ENCODE measurements at regions of chr16 and their contacts with region 1.

Region 1: DNA sequence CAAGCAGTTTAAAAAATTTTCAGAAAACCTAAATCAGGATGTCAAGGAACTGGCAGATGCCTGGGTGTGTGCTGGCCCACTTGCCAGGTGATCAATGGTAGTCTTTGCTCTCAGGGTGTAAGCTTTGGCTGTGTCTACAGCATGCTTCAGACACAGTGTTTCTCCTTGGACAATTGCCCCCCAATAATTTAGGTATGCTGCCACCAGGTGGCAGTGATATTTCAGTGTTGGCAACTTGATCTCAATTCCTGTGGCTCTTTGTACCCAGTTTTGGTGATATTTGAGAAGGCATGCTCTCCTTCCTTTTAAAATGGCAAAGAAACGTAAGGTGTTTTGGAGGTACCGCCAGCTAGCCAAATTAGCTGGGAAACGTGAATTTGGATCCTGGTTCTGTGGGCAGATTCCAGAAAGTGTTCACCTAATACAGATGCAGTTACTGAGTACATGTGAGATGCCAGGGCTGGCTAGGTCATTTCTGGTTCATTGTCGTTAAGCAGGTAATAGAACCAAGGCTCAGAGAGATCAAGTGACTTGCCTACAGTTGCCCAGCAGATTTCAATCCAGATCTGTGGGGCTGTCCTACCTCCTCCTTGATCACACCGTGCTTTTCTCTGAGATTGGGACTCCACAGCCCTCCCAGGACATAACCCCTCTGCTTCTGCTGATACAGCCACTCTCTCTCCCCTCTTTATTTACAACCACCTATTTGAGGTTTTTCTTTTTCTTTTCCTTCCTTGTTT is 155.6 kb upstream of the PLCG2 start:
- DNase-seq: peak; percentile 73
- ATAC-seq: peak; percentile 52
- H3K4me3 Mint-ChIP-seq: no peak overlapping the region
- H3K27ac Mint-ChIP-seq: peak overlapping the region; percentile 17
- H3K4me1 Mint-ChIP-seq: peaks cover 29% of the 10 kb centered on the region
- H3K27me3 Mint-ChIP-seq: no peaks in the 10 kb centered on the region

Region 2: GRCh38 chr16:81652798-81653505 is 29.4 kb after region 1 on chr16:
- CTCF ChIA-PET with region 1: no interaction called
- DNase-seq: no peak
- ATAC-seq: no peak
- H3K4me3 Mint-ChIP-seq: no peak overlapping the region
- H3K27ac Mint-ChIP-seq: peak overlapping the region; percentile 19
- H3K4me1 Mint-ChIP-seq: peaks cover 2% of the 10 kb centered on the region
- H3K27me3 Mint-ChIP-seq: no peaks in the 10 kb centered on the region

Region 3: GRCh38 chr16:81696961-81697615 is 73.6 kb after region 1 on chr16:
- CTCF ChIA-PET with region 1: interaction called, 14 read pairs
- DNase-seq: peak; percentile 65
- ATAC-seq: peak; percentile 45
- H3K4me3 Mint-ChIP-seq: no peak overlapping the region
- H3K27ac Mint-ChIP-seq: no peak overlapping the region
- H3K4me1 Mint-ChIP-seq: peaks cover 3% of the 10 kb centered on the region
- H3K27me3 Mint-ChIP-seq: no peaks in the 10 kb centered on the region

Region 4: GRCh38 chr16:81723098-81723723 is 99.7 kb after region 1 on chr16:
- CTCF ChIA-PET with region 1: interaction called, 11 read pairs
- DNase-seq: peak; percentile 51
- ATAC-seq: peak; percentile 80
- H3K4me3 Mint-ChIP-seq: no peak overlapping the region
- H3K27ac Mint-ChIP-seq: no peak overlapping the region
- H3K4me1 Mint-ChIP-seq: peaks cover 16% of the 10 kb centered on the region
- H3K27me3 Mint-ChIP-seq: peaks cover 6% of the 10 kb centered on the region

Region 5: DNA sequence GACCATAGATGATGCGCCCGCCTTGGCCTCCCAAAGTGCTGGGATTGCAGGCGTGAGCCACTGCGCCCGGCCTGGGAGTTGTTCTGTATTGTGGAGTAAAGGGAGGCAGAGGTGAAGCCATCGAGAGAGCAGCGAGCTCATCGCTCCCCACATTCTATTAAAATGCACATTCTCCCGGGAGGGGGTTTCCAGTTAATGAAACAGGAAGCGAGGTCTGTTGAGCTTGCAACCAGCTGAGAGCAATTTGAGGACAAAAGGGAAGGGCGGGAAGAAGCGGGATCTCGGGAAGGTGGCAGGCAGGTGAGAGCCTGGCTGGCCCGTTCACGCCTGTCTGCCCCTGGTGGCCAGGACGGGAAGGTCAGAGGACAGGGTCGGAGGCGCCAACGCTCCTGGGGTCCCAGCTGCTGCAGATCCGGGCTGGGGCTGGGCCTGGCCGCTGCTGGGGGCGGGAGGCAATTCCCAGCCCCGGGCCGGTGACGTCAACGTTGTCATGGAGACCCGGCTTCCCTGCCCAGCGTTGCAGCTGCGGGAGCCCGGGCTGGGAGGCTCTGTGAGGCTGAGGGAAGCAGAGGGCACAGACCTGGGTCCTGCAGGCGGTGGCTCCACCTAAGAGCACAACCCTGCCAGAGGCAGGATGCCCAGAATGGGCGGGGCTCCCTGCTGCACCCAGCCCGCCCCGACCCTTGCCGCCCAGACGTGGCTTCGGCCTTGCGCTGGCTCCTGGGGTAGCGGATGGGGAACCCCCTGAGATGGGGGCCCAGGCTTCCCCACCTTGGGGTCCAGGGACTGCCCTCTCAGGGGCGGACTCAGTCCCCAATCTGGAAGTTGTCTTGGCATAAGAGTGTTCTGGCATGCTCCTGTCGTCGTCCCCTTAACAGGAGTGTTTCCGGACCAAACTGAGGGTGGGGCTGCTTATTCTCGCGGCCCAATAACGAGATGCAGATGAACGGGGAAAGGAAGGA is 106.8 kb after region 1 on chr16:
- CTCF ChIA-PET with region 1: interaction called, 10 read pairs
- DNase-seq: peak; percentile 71
- ATAC-seq: peak; percentile 92
- H3K4me3 Mint-ChIP-seq: peak overlapping the region; percentile 72
- H3K27ac Mint-ChIP-seq: peak overlapping the region; percentile 79
- H3K4me1 Mint-ChIP-seq: peaks cover 17% of the 10 kb centered on the region
- H3K27me3 Mint-ChIP-seq: no peaks in the 10 kb centered on the region